ENCODE measurements at regions of chr12 and their contacts with region 1.

Region 1: GRCh38 chr12:47032644-47033043 is 46.8 kb upstream of the PCED1B start:
- DNase-seq: peak in 2 of 4 donors; percentile 46 to 65
- ATAC-seq: peak; percentile 89
- H3K4me3 ChIP-seq: no peak overlapping the region
- H3K27ac ChIP-seq: no peak overlapping the region
- H3K4me1 ChIP-seq: peaks cover 0 to 7% of the 10 kb centered on the region in 2 donors
- H3K27me3 ChIP-seq: no peaks in the 10 kb centered on the region
- CTCF ChIP-seq: peak; percentile 41 to 54

Region 2: DNA sequence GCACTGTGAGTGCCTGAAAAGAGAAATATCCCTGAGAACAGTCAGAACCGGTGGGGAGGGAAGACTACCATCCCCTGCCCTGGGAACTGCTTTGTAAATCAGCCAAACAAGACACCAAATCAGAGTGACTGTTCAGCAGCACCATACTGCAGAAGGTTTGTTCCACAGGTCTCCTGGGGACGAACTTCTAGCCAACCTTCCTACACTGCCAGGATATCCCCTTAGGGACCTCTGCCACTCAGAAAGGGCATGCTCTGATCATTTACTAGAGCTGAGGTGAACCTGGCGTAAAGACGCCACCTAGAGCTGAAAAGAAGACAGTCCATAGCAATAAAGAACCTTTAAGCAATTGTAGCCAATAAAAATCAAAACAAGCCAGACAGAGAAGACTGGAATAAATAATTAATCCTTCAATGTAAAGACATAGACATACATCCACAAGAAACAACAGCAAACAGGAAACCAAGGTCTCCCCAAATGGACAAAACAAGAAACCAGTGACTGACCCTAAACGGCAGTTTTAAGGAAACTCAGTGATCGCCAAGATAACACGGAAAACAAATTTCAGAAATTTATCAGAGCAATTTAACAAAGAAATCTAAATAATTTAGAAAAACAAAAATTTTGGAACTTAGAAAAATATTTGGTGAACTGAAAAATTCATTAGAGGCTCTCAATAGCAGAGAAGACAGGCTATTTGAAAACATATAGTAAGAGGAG is 275.2 kb after region 1 on chr12:
- intact Hi-C with region 1: loop called in 1 of 2 experiments (anchors 10 kb)
- DNase-seq: peak in 3 of 4 donors; percentile 9 to 47 (median 40)
- ATAC-seq: peak; percentile 98
- H3K4me3 ChIP-seq: peak overlapping the region in 1 of 2 donors; percentile 17
- H3K27ac ChIP-seq: no peak overlapping the region
- H3K4me1 ChIP-seq: peaks cover 0 to 6% of the 10 kb centered on the region in 2 donors
- H3K27me3 ChIP-seq: no peaks in the 10 kb centered on the region
- CTCF ChIP-seq: peak; percentile 50 to 55

Region 3: GRCh38 chr12:47397664-47398281 is 365.1 kb after region 1 on chr12:
- intact Hi-C with region 1: loop called in 1 of 2 experiments (anchors 10 kb)
- DNase-seq: no peak
- ATAC-seq: peak; percentile 83
- H3K4me3 ChIP-seq: no peak overlapping the region
- H3K27ac ChIP-seq: no peak overlapping the region
- H3K4me1 ChIP-seq: peaks cover 0 to 16% of the 10 kb centered on the region in 2 donors
- H3K27me3 ChIP-seq: no peaks in the 10 kb centered on the region
- CTCF ChIP-seq: peak; percentile 34 to 45

Measured in left lung (tissue), 14 donors.